PC-3 (cell line): ENCODE measurements at regions of chr1 and their contacts with region 1.

Region 1: DNA sequence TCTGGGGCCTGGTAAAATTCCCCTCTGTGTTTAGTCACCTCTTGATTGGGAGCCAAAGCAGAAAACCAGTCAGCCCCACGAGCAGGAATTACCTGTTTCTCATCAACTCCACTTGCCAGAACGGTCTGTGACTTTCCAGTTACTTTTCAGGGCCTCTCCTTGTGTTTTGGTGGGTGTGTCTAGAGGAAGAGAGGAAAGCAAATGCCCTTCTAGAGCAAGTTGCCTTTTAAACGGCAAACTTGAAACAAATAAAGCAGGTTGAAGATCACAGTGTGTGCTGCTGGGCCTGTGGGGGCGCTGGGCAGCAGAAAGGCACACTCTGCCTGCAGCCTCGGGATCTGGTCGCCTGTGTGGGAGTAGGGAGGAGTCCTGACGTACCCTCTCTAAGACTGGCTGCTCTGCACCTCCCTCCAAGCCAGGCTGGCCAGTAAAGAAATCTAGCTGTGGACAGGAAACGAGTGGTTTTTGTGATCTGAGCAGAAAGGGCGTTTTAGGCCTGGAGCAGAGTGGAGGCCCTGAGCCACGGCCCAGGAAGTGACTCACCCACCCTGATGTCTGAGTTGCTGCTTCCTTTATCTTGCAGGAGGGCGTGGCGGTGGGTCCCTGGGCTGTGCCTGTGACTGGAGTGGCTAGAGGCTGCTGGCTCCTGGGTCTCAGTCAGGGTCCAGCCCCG is 11.1 kb upstream of the S100A11 start:
- DNase-seq: peak; percentile 99
- ATAC-seq: peak; percentile 87
- H3K4me3 ChIP-seq: peak overlapping the region; percentile 64
- H3K27ac ChIP-seq: peak overlapping the region; percentile 98
- H3K4me1 ChIP-seq: peaks cover 57% of the 10 kb centered on the region
- H3K27me3 ChIP-seq: 0 out of 2 replicates have a peak, but pooled peaks cover 1% of the 10 kb centered on the region
- CTCF ChIP-seq: peak; percentile 57

Region 2: DNA sequence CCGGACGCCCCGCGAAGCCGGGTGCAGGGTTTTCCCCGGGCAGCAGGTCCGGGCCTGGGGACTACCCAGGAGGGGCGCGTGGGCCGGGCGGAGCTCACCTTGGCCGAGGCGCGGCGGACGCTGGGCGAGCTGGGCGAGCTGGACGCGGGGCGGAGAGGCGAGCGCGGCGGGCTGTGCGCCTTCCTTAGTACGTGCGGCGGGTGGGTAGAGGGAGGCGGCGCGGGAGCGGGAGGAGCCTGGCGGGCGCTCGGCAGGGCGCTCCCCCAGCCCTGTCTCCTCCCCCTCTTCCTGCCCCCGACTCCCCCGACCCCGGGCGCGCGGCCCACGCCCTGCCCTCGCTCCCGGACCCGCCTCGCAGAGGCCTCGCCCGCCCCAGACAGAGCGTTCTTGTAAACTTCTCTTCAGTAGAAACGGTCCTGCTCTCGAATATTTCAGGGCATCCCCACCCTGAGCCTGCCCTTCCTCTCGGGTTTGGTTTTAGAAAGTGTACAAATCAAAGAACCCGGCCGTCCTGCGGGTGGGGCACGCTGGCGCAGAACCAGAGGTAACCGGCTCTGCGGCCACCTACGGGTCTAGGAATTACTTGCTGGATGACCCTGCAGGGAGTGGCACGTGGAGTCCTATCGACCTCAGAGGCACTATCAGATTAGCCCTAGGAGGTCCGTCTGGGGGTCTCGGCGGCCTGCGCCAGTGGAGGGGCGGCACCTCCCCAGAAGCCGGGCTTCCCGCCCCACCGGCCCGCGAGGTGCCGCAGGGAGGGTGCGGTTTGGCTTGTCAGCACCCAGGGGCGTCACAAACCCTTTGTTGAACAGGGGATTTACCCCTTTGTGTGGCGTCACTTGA is 54.0 kb before region 1 on chr1 and contains the start of gene S100A10:
- CTCF ChIA-PET with region 1: interaction called, 3 read pairs
- POLR2A ChIA-PET with region 1: interaction called, 12 read pairs
- intact Hi-C with region 1: no loop called
- DNase-seq: peak; percentile 89
- ATAC-seq: peak; percentile 25
- H3K4me3 ChIP-seq: peak within 1 kb of the TSS; percentile 91
- H3K27ac ChIP-seq: peak within 1 kb of the TSS; percentile 97
- H3K4me1 ChIP-seq: peaks cover 76% of the 10 kb centered on the region
- H3K27me3 ChIP-seq: no peaks in the 10 kb centered on the region
- CTCF ChIP-seq: no peak
- total RNA-seq, gene S100A10: 349 and 400 TPM in 2 replicates

Region 3: DNA sequence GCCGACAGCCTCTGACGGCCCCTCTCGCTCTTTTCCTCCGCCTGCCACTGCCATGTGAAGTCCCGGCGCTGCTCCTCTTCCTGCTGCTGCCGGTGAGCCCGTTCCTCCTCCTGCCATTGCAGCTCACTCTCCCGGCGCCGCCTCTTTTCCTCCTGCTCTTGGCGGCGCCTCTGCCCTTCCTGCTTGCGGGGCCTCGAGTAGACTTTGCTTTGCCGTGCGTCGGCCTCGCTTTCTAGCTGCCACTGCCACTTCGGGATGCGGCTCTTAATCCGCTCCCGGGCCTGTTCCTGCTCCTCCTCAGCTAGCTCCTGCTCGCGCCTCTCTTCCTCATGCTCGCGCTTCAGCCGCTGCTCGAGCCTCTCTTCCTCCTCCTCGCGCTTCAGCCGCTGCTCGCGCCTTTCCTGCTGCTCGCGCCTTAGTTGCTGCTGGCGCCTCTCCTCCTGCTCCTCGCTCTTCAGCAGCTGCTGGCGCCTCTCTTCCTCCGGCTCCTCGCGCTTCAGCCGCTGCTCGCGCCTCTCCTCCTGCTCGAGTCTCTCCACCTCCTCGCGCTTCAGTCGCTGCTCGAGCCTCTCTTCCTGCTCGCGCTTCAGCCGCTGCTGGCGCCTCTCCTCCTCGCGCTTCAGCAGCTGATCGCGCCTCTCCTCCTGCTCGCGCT is 63.1 kb after region 1 on chr1:
- CTCF ChIA-PET with region 1: no interaction called
- POLR2A ChIA-PET with region 1: interaction called, 6 read pairs
- intact Hi-C with region 1: loop called (anchors 2 kb)
- DNase-seq: peak; percentile 50
- ATAC-seq: peak; percentile 61
- H3K4me3 ChIP-seq: peak overlapping the region; percentile 71
- H3K27ac ChIP-seq: no peak overlapping the region
- H3K4me1 ChIP-seq: peaks cover 42% of the 10 kb centered on the region
- H3K27me3 ChIP-seq: peaks cover 98% of the 10 kb centered on the region
- CTCF ChIP-seq: no peak

Region 4: DNA sequence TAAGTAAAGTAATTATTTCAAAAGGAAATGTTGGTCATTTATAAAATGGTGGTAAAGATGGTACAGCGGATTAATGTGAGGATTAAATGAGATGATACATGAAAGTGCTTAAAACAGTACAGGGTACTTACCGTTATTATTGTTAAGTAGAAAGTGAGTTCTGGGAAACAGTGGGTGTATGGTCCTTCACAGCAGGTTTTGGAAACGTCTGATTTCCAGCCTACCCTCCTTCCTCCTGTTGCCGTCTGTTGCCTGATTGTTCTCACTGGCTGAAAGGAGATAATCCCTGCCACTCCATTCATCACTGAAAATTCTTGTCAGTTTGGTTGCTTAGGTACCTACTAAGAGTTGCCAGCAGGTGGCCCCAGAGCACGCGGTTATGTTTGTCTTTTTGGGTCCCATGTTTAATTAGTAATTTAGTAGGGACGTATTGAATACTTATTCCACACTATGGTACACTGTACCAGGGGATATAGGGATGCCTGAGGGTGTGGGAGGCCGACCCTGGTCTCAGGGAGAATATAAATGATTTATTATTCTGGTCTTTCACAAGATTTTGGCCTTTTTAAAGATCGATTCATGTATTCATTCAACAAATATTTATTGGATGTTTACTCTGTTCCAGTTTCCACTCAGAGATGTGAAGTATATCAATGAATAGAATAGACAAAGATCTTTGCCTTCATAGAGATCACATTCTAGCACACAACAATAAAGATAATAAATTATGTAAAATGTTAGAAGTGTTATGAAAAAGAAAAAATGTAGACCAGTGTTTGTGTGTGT is 142.0 kb after region 1 on chr1:
- CTCF ChIA-PET with region 1: interaction called, 8 read pairs
- POLR2A ChIA-PET with region 1: no interaction called
- intact Hi-C with region 1: loop called (anchors 1 kb)
- DNase-seq: peak; percentile 83
- ATAC-seq: peak; percentile 45
- H3K4me3 ChIP-seq: peak overlapping the region; percentile 67
- H3K27ac ChIP-seq: no peak overlapping the region
- H3K4me1 ChIP-seq: peaks cover 17% of the 10 kb centered on the region
- H3K27me3 ChIP-seq: no peaks in the 10 kb centered on the region
- CTCF ChIP-seq: peak; percentile 95

Region 5: DNA sequence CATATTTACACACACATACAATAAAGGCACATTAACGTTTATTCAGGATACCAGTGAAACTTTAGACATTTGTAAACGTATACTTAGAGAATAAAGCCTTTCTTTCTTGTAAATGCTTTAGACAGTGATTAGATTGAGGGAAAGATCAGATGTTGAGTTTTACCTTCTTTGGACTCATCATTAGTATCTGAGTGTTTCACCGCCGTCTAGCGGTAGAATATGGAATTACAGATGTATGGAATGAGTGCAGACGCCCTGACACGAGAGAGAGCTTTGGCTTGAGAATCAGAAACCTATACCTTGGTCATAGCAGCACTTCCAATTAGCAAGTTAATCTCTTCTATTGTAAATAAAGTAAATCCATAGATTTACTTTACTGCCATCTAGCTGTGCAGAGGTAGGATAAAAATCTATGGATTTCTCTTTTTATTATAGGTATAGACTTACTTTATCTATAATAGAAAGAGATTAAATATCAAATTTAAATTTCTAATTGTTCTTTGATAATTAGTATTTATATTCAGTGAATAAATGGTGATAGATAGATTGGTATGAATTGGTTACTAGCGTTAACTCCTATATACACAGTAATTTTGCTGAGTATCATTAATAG is 299.4 kb after region 1 on chr1:
- CTCF ChIA-PET with region 1: no interaction called
- POLR2A ChIA-PET with region 1: no interaction called
- intact Hi-C with region 1: loop called (anchors 2 kb)
- DNase-seq: peak; percentile 91
- ATAC-seq: peak; percentile 76
- H3K4me3 ChIP-seq: no peak overlapping the region
- H3K27ac ChIP-seq: no peak overlapping the region
- H3K4me1 ChIP-seq: no peaks in the 10 kb centered on the region
- H3K27me3 ChIP-seq: peaks cover 5% of the 10 kb centered on the region; the same call in 1 of the 2 replicates
- CTCF ChIP-seq: peak; percentile 95

Region 6: GRCh38 chr1:152459596-152460528 is 412.0 kb after region 1 on chr1:
- CTCF ChIA-PET with region 1: no interaction called
- POLR2A ChIA-PET with region 1: no interaction called
- intact Hi-C with region 1: loop called (anchors 1 kb)
- DNase-seq: peak; percentile 76
- ATAC-seq: peak; percentile 66
- H3K4me3 ChIP-seq: no peak overlapping the region
- H3K27ac ChIP-seq: no peak overlapping the region
- H3K4me1 ChIP-seq: no peaks in the 10 kb centered on the region
- H3K27me3 ChIP-seq: no peaks in the 10 kb centered on the region
- CTCF ChIP-seq: peak; percentile 94